Right ventricle myocardium inferior (tissue), 1 donor: ENCODE measurements at regions of chr7 and their contacts with region 1.

Region 1: GRCh38 chr7:106153891-106154449 is 41.9 kb upstream of the SYPL1 start:
- DNase-seq: peak; percentile 77
- ATAC-seq: peak; percentile 93

Region 2: DNA sequence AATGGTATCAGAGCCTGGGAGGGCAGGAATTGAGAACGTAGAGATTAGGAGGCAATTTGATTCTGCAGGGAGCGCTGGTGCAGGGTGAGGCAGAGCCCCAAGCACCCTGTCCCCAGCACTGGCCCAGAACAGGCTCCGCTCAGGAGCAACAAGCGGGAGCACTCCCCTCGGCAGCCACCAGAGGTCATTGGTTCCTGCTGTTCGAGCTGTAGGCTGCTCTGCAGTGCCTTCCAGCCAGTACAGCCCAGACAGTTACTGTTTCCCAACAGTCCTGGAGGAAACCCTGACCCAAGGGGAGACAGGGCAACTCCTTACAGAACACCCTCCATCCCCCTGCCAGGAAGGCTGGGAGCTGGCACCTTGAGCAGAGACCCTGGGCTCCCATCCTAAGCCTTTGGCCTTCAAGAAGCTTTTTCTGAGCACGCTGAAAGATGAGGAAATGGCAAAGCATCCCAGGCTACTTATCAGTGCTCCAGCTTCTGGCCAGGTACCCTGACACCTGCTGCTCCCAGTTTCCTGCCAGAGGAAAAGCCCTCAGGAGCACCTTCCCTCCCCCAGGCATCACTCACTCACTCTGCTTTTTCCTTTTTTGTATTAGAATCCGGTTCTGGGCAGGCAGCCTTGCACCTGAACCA is 501.5 kb before region 1 on chr7:
- intact Hi-C with region 1: loop called (anchors 10 kb)
- DNase-seq: peak; percentile 84
- ATAC-seq: peak; percentile 90

Region 3: DNA sequence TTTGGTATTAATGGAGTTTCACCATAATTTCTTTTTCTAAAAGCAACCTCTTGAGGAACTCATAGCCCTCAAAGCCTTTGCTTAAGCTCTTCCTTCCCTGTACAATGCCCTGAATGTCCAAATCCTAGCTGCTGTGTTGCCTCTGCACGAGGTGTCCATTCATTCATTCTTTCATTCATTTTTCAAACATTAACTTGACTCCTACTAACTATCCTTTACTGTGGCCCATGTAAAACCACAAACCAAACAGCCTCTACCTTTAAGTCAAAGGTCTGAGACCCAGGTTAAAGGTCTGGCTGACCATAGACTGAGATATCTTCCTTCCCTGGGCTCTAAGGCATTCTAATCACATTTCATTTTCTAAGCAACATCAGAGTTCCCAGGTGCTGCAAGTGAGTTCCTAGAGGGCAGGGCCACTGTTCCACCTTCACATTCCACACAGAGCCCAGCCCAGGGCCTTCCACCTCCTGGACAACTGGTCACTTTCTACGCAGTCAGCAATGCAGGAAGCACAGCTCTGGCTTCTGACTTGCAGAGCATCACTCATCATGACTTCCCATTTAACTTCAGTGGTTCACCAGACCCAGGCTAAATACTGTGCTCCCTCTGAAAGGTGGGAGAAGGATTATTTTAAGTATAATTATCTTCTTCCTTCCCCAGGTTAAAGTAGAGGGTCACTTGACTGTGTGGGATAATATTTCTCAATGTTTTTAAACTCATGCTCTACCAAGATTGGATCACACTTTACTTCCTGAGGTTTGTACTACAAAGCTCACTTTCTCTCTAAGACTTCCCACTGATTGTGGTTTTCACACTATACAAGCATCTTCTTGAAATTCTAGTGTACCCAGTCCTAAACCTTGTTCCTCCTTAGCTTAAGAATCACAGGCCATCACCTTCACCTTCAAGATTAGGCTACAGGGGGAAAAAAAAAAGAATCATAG is 296.7 kb before region 1 on chr7:
- intact Hi-C with region 1: no loop called
- DNase-seq: no peak
- ATAC-seq: no peak

Region 4: DNA sequence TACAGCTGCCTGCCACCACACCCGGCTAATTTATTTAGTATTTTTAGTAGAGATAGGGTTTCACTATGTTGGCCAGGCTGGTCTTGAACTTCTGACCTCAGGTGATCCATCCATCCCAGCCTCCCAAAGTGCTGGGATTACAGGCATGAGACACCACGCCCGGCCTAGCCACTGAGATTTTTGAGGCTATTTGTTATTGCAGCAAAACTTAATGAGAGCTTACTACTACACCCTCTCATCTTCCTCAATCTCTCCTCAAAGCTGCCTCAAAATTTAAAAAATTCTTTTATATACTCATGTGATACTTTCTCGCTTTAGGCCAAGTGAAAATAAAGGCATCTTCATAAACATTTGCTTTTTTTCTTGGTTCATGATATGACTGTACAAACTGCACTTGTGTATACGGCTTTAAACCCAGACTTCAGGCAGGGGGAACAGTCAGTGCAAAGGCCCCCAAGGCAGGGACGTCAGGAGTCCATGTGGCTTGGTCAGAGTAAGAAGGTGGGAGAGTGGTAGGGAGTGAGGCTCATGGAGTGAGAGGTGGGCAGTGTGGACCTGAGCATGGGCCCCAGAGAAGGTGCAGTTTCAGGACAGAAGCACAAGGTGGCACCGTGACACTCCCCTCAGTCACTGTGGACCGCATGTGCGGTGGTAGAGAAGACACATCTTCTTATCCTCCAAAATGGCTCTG is 97.3 kb before region 1 on chr7:
- intact Hi-C with region 1: loop called (anchors 1 kb)
- DNase-seq: no peak
- ATAC-seq: peak; percentile 89

Region 5: GRCh38 chr7:106112117-106112971 is 41.6 kb before region 1 on chr7 and contains the start of gene SYPL1:
- intact Hi-C with region 1: loop called (anchors 5 kb)
- DNase-seq: peak; percentile 97
- ATAC-seq: peak; percentile 95
- total RNA-seq, gene SYPL1: 89.9 TPM

Region 6: GRCh38 chr7:106187613-106188350 is 33.8 kb after region 1 on chr7:
- intact Hi-C with region 1: no loop called
- DNase-seq: no peak
- ATAC-seq: no peak

Region 7: DNA sequence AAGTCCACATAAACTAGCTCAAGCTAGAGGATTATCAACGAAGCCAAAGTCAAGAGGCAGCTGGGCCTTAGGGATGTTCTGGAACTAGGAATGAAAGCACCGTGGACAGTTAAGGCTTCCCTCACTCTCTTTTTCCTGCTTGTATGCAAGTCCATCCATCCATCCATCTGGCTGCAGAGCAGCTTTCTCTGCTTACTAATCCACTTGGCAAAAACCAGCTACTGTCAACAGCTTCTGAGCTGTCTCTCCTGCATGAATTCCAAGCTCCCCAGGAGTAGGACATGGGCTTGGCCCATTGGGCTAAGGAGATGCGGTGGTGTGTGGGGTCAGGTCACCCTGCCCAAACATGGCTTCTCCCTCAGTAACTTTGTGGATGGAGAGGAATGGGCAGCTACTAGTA is 64.6 kb after region 1 on chr7:
- intact Hi-C with region 1: no loop called
- DNase-seq: no peak
- ATAC-seq: peak; percentile 29